Heart left ventricle (tissue), 16 donors: ENCODE measurements at regions of chr9 and their contacts with region 1.

Region 1: GRCh38 chr9:12266758-12267157 is 426.4 kb upstream of the TYRP1 start:
- DNase-seq: no peak
- ATAC-seq: no peak
- H3K4me3 ChIP-seq: no peak overlapping the region
- H3K27ac ChIP-seq: no peak overlapping the region
- H3K4me1 ChIP-seq: no peaks in the 10 kb centered on the region
- H3K27me3 ChIP-seq: no peaks in the 10 kb centered on the region
- CTCF ChIP-seq: no peak
- POLR2A ChIP-seq: no peak

Region 2: DNA sequence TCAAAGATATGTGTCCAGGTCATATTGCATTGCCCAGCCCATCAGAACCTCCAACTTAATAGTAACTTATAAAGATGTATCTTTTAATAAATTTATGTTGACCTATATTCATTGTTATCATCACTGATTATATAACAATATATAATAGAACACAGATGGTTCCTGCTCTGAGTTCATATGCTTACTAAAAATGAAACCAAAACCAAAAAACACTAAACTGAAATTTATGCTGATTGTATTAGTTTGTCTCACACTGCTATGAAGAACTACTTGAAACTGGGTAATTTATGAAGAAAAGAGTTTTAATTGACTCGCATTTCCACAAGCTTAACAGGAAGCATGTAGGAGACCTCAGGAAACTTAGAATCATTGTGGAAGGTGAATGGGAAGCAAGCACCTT is 36.0 kb before region 1 on chr9:
- intact Hi-C with region 1: loop called in 1 of 10 experiments (anchors 5 kb)
- DNase-seq: no peak
- ATAC-seq: no peak
- H3K4me3 ChIP-seq: no peak overlapping the region
- H3K27ac ChIP-seq: no peak overlapping the region
- H3K4me1 ChIP-seq: no peaks in the 10 kb centered on the region
- H3K27me3 ChIP-seq: no peaks in the 10 kb centered on the region
- CTCF ChIP-seq: no peak
- POLR2A ChIP-seq: no peak

Region 3: DNA sequence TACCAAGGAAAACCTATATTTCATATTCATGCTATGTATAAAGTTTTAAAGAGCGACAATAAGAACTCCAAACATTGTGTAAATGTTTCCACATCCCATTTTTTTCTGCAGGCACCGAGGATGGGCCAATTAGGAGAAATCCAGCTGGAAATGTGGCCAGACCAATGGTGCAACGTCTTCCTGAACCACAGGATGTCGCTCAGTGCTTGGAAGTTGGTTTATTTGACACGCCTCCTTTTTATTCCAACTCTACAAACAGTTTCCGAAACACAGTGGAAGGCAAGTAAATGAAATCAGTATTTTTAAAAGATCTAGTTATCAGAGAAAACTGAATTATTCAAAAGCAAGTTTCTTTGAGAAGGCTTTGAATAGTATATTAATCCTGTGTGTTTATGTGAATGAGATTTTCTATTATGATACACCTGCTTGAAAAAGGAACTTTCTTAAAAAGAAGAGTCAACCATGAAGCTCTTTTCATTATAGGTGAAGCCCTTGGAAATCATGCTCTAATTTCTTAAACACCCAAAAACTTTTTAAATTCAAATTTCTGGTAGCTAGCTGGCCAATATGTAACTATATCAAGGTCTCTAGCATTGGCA is 435.5 kb after region 1 on chr9:
- intact Hi-C with region 1: no loop called
- DNase-seq: peak in 3 of 5 donors; percentile 10 to 33 (median 22)
- ATAC-seq: peak in 3 of 4 donors; percentile 58 to 67 (median 65)
- H3K4me3 ChIP-seq: no peak overlapping the region
- H3K27ac ChIP-seq: no peak overlapping the region
- H3K4me1 ChIP-seq: peaks cover 0 to 12% (median 3%) of the 10 kb centered on the region in 12 donors
- H3K27me3 ChIP-seq: no peaks in the 10 kb centered on the region
- CTCF ChIP-seq: peak; percentile 11 to 70 (median 46)
- POLR2A ChIP-seq: no peak